Prostate gland (tissue), 2 donors: ENCODE measurements at regions of chr15 and their contacts with region 1.

Region 1: DNA sequence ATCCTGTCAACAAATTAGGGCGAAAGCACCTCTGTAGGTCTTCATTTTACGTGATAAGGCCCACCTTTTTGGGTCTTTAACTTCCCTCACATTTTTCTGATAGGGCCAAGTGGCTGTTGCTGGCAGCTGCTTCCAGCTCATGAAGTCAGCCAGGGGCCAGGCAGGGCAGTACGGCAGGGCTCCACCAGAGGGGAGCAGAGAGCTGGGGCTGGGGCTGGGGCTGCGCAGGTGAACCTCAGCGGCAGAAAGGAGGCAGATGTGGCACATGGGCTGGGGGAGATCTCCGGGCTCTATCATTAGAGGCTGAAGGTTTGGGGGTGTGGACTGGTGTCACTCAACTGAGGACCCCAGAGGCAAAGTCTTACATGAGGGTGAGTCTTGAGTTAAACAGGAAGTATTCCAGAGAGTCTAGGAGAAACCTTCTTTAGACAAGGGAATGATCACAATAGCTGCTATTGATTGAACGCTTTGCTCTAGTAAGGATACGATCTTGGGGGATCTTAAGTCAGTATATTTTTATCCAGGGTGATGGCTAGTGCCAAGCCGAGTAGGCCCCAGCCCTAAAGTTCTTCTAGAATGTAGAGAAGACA is 62.8 kb upstream of the MEX3B start:
- DNase-seq: peak; percentile 54
- H3K4me3 ChIP-seq: no peak overlapping the region
- H3K27ac ChIP-seq: no peak overlapping the region
- H3K4me1 ChIP-seq: no peaks in the 10 kb centered on the region
- H3K27me3 ChIP-seq: no peaks in the 10 kb centered on the region
- CTCF ChIP-seq: peak; percentile 60 to 90 (median 80)
- POLR2A ChIP-seq: no peak

Region 2: GRCh38 chr15:81492331-81492963 is 616.1 kb before region 1 on chr15:
- intact Hi-C with region 1: no loop called
- DNase-seq: no peak
- H3K4me3 ChIP-seq: no peak overlapping the region
- H3K27ac ChIP-seq: no peak overlapping the region
- H3K4me1 ChIP-seq: no peaks in the 10 kb centered on the region
- H3K27me3 ChIP-seq: no peaks in the 10 kb centered on the region
- CTCF ChIP-seq: no peak
- POLR2A ChIP-seq: no peak

Region 3: DNA sequence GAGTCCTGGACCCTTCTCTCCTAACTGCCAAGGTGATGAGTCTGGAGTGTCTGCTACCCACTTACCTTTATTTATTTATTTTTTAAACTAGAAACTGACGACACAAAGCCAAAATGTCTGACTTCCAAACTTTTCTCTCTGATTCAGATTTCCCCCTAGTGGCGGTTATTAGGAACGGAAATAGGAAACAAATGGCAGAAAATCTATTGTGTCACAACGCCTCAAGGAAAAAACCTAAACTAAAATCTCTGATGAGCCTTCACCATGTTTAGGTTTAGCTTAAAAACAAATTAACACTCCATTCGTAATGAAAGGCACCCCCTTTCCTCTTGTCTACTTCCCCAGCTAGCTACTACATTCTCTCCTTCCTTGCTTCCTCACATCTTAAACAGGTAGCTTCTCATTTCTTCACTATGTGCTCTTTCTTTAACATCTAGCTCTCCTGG is 31.3 kb after region 1 on chr15:
- intact Hi-C with region 1: loop called (anchors 1 kb)
- DNase-seq: no peak
- H3K4me3 ChIP-seq: no peak overlapping the region
- H3K27ac ChIP-seq: no peak overlapping the region
- H3K4me1 ChIP-seq: no peaks in the 10 kb centered on the region
- H3K27me3 ChIP-seq: no peaks in the 10 kb centered on the region
- CTCF ChIP-seq: peak; percentile 48 to 65 (median 58)
- POLR2A ChIP-seq: no peak

Region 4: GRCh38 chr15:82197733-82198594 is 89.4 kb after region 1 on chr15:
- intact Hi-C with region 1: loop called (anchors 5 kb)
- DNase-seq: peak; percentile 66
- H3K4me3 ChIP-seq: no peak overlapping the region
- H3K27ac ChIP-seq: no peak overlapping the region
- H3K4me1 ChIP-seq: no peaks in the 10 kb centered on the region
- H3K27me3 ChIP-seq: no peaks in the 10 kb centered on the region
- CTCF ChIP-seq: peak; percentile 22 to 79 (median 76)
- POLR2A ChIP-seq: no peak